Right ventricle myocardium superior (tissue), 1 donor: ENCODE measurements at regions of chr1 and their contacts with region 1.

Region 1: DNA sequence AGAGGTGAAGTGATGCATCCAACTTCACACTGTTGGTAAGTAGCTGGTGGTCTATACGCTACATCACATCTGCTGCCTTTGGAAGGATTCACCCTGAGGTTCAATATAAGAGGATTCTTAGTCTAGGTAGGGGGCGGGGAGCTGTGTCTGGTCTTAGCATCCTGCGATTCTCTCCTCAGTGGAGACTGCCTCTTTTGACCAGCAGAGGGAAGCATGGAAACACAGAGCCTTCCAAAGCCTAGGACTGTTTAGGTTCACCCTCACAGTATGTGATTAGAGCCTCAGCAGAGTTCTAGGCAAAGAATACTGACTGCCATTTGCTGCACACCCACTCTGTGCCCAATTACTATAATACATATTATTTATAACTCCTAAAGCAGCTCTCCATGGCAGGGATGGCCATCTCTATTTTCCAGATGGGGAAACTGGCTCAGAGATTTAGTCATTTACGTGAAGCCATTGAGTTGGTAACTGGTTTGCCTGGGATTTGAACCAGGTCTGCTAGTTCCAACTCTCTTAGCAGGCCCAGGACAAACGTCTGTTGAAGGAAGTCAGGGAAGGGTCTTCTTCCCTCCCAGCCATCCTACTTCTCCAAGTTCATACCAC is 28.9 kb upstream of the EFCAB14 start:
- DNase-seq: no peak
- ATAC-seq: peak; percentile 82

Region 2: GRCh38 chr1:46991083-46991923 is 243.5 kb after region 1 on chr1:
- intact Hi-C with region 1: loop called (anchors 5 kb)
- DNase-seq: no peak
- ATAC-seq: no peak

Region 3: GRCh38 chr1:47179017-47179987 is 431.5 kb after region 1 on chr1:
- intact Hi-C with region 1: loop called (anchors 10 kb)
- DNase-seq: peak; percentile 95
- ATAC-seq: peak; percentile 94